ENCODE measurements at regions of chr12 and their contacts with region 1.

Region 1: DNA sequence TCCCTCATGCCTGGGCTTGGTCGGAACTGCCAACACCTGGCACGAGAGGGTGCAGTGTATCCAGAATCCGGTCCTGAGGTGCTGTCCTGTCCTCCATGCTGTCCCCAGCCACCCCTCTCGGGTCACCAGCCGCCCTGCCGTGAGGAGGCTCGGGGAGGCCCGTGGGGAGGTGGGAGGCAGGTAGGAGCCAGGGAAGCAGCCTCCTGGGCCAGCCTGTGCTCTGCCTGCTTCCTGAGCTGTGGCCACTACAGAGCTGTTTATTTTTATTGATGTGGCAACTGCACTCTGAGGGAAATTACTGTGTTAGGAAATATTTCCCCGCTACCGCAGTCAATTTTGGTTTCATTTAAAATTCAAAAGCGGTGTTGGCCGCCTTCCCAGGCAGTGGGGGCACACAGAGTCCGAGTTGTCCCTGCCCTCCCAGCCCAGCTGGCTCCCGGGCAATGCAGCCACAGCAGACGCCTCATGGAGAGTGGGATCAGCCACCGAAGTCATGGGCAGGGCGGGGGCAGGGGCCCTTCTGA is 18.3 kb downstream of the NOC4L start:
- DNase-seq: peak in 1 of 9 donors; percentile 44
- ATAC-seq: peak; percentile 83
- H3K4me3 ChIP-seq: no peak overlapping the region
- H3K4me3 Mint-ChIP-seq: peak overlapping the region in 7 of 10 donors; percentile 17 to 69 (median 58)
- H3K27ac ChIP-seq: no peak overlapping the region
- H3K27ac Mint-ChIP-seq: no peak overlapping the region
- H3K4me1 ChIP-seq: peaks cover 0 to 24% of the 10 kb centered on the region in 2 donors
- H3K4me1 Mint-ChIP-seq: peaks cover 11 to 26% (median 16%) of the 10 kb centered on the region in 7 donors
- H3K27me3 ChIP-seq: no peaks in the 10 kb centered on the region
- H3K27me3 Mint-ChIP-seq: no peaks in the 10 kb centered on the region

Region 2: GRCh38 chr12:132178801-132179401 is 16.3 kb after region 1 on chr12:
- CTCF ChIA-PET with region 1: interaction called, 3 read pairs
- POLR2A ChIA-PET with region 1: interaction called, 10 read pairs
- intact Hi-C with region 1: no loop called
- DNase-seq: peak in 7 of 9 donors; percentile 60 to 77 (median 70)
- ATAC-seq: peak; percentile 74
- H3K4me3 ChIP-seq: peak overlapping the region; percentile 56
- H3K4me3 Mint-ChIP-seq: peak overlapping the region; percentile 80 to 95 (median 86)
- H3K27ac ChIP-seq: peak overlapping the region; percentile 53
- H3K27ac Mint-ChIP-seq: peak overlapping the region; percentile 90 to 99 (median 94)
- H3K4me1 ChIP-seq: peaks cover 3 to 25% of the 10 kb centered on the region in 2 donors
- H3K4me1 Mint-ChIP-seq: peaks cover 21 to 61% (median 36%) of the 10 kb centered on the region in 7 donors
- H3K27me3 ChIP-seq: no peaks in the 10 kb centered on the region
- H3K27me3 Mint-ChIP-seq: peaks cover 0 to 9% (median 0%) of the 10 kb centered on the region in 5 donors

Region 3: GRCh38 chr12:132218915-132219314 is 56.3 kb after region 1 on chr12:
- CTCF ChIA-PET with region 1: interaction called, 6 read pairs
- POLR2A ChIA-PET with region 1: no interaction called
- intact Hi-C with region 1: loop called in 1 of 2 experiments (anchors 2 kb)
- DNase-seq: peak in 7 of 9 donors; percentile 40 to 67 (median 57)
- ATAC-seq: peak; percentile 66
- H3K4me3 ChIP-seq: no peak overlapping the region
- H3K4me3 Mint-ChIP-seq: no peak overlapping the region
- H3K27ac ChIP-seq: no peak overlapping the region
- H3K27ac Mint-ChIP-seq: peak overlapping the region in 3 of 9 donors; percentile 4 to 55 (median 38)
- H3K4me1 ChIP-seq: peaks cover 6 to 10% of the 10 kb centered on the region in 2 donors
- H3K4me1 Mint-ChIP-seq: peaks cover 8 to 24% (median 13%) of the 10 kb centered on the region in 7 donors
- H3K27me3 ChIP-seq: no peaks in the 10 kb centered on the region
- H3K27me3 Mint-ChIP-seq: peaks cover 0 to 12% (median 8%) of the 10 kb centered on the region in 5 donors